ENCODE measurements at regions of chr4 and their contacts with region 1.

Region 1: GRCh38 chr4:174120446-174121295 is 162.8 kb downstream of the FBXO8 start:
- DNase-seq: peak; percentile 66 to 67
- ATAC-seq: peak; percentile 67 to 95 (median 83)
- H3K4me3 ChIP-seq: peak overlapping the region in 8 of 10 donors; percentile 17 to 54 (median 44)
- H3K27ac ChIP-seq: peak overlapping the region in 7 of 10 donors; percentile 5 to 65 (median 30)
- H3K4me1 ChIP-seq: peaks cover 0 to 31% (median 0%) of the 10 kb centered on the region in 9 donors
- H3K27me3 ChIP-seq: no peaks in the 10 kb centered on the region
- CTCF ChIP-seq: peak in 8 of 9 donors; percentile 22 to 60 (median 52)

Region 2: GRCh38 chr4:174005422-174005821 is 115.2 kb before region 1 on chr4:
- intact Hi-C with region 1: loop called in 1 of 10 experiments (anchors 10 kb)
- DNase-seq: no peak
- ATAC-seq: peak in 3 of 8 donors; percentile 54 to 88 (median 63)
- H3K4me3 ChIP-seq: no peak overlapping the region
- H3K27ac ChIP-seq: no peak overlapping the region
- H3K4me1 ChIP-seq: peaks cover 0 to 13% (median 0%) of the 10 kb centered on the region in 9 donors
- H3K27me3 ChIP-seq: no peaks in the 10 kb centered on the region
- CTCF ChIP-seq: no peak